Prostate gland (tissue), 2 donors: ENCODE measurements at regions of chr13 and their contacts with region 1.

Region 1: DNA sequence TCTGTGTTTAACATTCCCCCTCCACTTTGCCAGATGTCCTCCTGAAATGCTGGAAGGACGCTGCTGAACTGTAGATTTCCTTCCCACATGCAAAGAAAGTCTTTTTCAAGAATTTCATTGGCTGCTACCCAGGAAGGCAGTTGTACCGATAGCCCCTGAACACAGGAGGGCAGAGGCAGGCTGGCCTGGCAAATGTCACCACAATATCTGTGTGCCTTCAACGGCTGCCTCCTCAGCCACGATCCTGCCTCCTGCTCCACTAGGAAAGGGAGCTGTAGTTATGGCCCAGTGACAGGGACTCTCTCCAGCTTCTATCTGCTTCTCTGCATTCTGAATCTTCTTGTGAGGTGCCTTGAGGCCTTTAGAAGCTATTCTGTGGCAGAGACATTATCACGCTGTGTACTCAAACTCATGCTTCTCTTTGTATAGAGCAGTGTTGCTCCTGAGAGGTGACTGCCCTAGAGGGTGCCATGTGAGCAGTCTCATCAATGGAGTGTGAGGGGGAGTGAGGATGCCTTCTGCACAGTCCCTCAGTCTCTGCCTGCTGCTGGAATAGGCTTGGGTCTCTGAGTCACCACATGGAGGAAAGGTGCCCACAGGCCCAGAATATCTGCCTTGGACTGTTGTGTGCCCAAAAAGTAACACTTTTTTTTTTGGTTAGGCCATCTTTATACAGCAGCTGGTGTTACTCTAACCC is 279.8 kb downstream of the DNAJC15 start:
- DNase-seq: peak; percentile 65
- H3K4me3 ChIP-seq: no peak overlapping the region
- H3K27ac ChIP-seq: peak overlapping the region; percentile 65 to 79
- H3K4me1 ChIP-seq: peaks cover 19% of the 10 kb centered on the region
- H3K27me3 ChIP-seq: no peaks in the 10 kb centered on the region
- CTCF ChIP-seq: peak in 3 of 4 experiments; percentile 42 to 65 (median 61)
- POLR2A ChIP-seq: no peak

Region 2: GRCh38 chr13:43023289-43023951 is 279.8 kb before region 1 on chr13 and contains the start of gene DNAJC15:
- intact Hi-C with region 1: no loop called
- DNase-seq: peak; percentile 58
- H3K4me3 ChIP-seq: peak within 1 kb of the TSS; percentile 42 to 44
- H3K27ac ChIP-seq: peak within 1 kb of the TSS; percentile 47 to 71
- H3K4me1 ChIP-seq: no peaks in the 10 kb centered on the region
- H3K27me3 ChIP-seq: no peaks in the 10 kb centered on the region
- CTCF ChIP-seq: no peak
- POLR2A ChIP-seq: no peak
- total RNA-seq, gene DNAJC15: 1.4 to 8.2 TPM

Region 3: GRCh38 chr13:43196086-43196621 is 107.0 kb before region 1 on chr13:
- intact Hi-C with region 1: no loop called
- DNase-seq: no peak
- H3K4me3 ChIP-seq: no peak overlapping the region
- H3K27ac ChIP-seq: no peak overlapping the region
- H3K4me1 ChIP-seq: no peaks in the 10 kb centered on the region
- H3K27me3 ChIP-seq: no peaks in the 10 kb centered on the region
- CTCF ChIP-seq: no peak
- POLR2A ChIP-seq: no peak

Region 4: GRCh38 chr13:43269037-43269481 is 34.1 kb before region 1 on chr13:
- intact Hi-C with region 1: no loop called
- DNase-seq: peak; percentile 76
- H3K4me3 ChIP-seq: no peak overlapping the region
- H3K27ac ChIP-seq: no peak overlapping the region
- H3K4me1 ChIP-seq: no peaks in the 10 kb centered on the region
- H3K27me3 ChIP-seq: no peaks in the 10 kb centered on the region
- CTCF ChIP-seq: no peak
- POLR2A ChIP-seq: no peak

Region 5: GRCh38 chr13:43516401-43516833 is 213.2 kb after region 1 on chr13:
- intact Hi-C with region 1: loop called (anchors 10 kb)
- DNase-seq: peak; percentile 63
- H3K4me3 ChIP-seq: no peak overlapping the region
- H3K27ac ChIP-seq: peak overlapping the region; percentile 35 to 53
- H3K4me1 ChIP-seq: no peaks in the 10 kb centered on the region
- H3K27me3 ChIP-seq: no peaks in the 10 kb centered on the region
- CTCF ChIP-seq: no peak
- POLR2A ChIP-seq: no peak

Region 6: GRCh38 chr13:44169018-44169911 is 866.1 kb after region 1 on chr13:
- intact Hi-C with region 1: no loop called
- DNase-seq: no peak
- H3K4me3 ChIP-seq: no peak overlapping the region
- H3K27ac ChIP-seq: no peak overlapping the region
- H3K4me1 ChIP-seq: no peaks in the 10 kb centered on the region
- H3K27me3 ChIP-seq: no peaks in the 10 kb centered on the region
- CTCF ChIP-seq: no peak
- POLR2A ChIP-seq: no peak